ENCODE measurements at regions of chr12 and their contacts with region 1.

Region 1: GRCh38 chr12:119544765-119545625 is 48.6 kb upstream of the TMEM233 start:
- DNase-seq: peak; percentile 70
- H3K4me3 Mint-ChIP-seq: no peak overlapping the region
- H3K27ac Mint-ChIP-seq: no peak overlapping the region
- H3K4me1 Mint-ChIP-seq: no peaks in the 10 kb centered on the region
- H3K27me3 Mint-ChIP-seq: peaks cover 48% of the 10 kb centered on the region
- CTCF ChIP-seq: peak; percentile 91

Region 2: DNA sequence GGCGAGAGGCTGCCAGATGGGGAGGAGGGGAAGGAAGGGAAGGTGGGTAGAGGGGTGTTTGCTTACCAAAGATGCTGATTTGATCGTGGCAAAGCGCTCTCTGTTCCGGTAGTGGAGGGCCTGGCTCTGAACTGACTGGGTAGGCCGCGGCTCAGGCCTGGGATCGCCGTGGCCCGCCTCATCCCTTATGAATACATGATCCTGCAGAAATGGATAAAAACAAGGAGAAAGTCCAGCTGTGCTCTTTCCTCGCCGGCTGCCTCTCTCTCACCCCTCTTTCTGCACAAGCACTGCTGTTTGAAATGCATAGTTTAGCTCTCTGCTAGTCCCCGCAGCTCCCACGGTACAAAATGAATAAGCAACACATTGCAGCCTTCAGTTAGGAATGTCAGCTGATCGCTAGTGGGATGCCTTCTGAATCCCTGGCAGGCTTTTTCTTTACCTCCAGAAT is 1355.2 kb before region 1 on chr12:
- CTCF ChIA-PET with region 1: no interaction called
- POLR2A ChIA-PET with region 1: no interaction called
- intact Hi-C with region 1: loop called (anchors 10 kb)
- DNase-seq: no peak
- H3K4me3 Mint-ChIP-seq: no peak overlapping the region
- H3K27ac Mint-ChIP-seq: peak overlapping the region; percentile 63
- H3K4me1 Mint-ChIP-seq: peaks cover 24% of the 10 kb centered on the region
- H3K27me3 Mint-ChIP-seq: no peaks in the 10 kb centered on the region
- CTCF ChIP-seq: no peak

Region 3: DNA sequence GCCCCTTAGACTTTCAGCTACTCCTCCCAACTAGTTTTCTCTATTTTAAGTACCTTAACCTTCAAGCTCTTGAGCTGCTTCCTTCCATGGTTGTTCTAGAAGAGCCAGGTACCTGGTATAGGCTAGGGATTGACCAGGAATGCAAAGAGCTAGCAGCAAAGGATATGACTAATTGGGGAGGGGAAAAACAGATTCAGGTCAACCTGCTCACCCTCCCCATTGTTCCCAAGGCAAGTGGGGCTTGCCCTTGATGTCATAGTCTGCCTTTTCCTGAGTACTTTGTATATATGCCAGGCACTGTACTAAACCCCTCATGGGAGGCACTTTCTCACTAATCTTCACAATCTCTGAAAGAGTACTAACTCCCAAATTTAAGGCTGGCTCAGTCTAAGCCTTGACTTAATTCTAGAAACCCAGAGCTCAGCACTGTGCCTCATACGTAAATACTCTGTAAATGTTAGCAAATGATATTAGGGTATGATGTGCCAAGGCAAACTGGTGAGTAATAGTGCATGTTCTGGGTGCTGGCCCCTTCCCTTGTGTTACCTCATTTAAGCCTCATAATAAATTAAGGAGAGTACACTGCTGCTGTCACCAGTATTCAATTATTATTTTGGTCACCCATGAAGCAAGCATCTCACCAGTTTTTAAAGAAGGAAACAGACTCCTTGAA is 1126.5 kb before region 1 on chr12:
- CTCF ChIA-PET with region 1: interaction called, 20 read pairs
- POLR2A ChIA-PET with region 1: no interaction called
- intact Hi-C with region 1: no loop called
- DNase-seq: peak; percentile 50
- H3K4me3 Mint-ChIP-seq: no peak overlapping the region
- H3K27ac Mint-ChIP-seq: peak overlapping the region; percentile 49
- H3K4me1 Mint-ChIP-seq: peaks cover 15% of the 10 kb centered on the region
- H3K27me3 Mint-ChIP-seq: no peaks in the 10 kb centered on the region
- CTCF ChIP-seq: no peak

Region 4: DNA sequence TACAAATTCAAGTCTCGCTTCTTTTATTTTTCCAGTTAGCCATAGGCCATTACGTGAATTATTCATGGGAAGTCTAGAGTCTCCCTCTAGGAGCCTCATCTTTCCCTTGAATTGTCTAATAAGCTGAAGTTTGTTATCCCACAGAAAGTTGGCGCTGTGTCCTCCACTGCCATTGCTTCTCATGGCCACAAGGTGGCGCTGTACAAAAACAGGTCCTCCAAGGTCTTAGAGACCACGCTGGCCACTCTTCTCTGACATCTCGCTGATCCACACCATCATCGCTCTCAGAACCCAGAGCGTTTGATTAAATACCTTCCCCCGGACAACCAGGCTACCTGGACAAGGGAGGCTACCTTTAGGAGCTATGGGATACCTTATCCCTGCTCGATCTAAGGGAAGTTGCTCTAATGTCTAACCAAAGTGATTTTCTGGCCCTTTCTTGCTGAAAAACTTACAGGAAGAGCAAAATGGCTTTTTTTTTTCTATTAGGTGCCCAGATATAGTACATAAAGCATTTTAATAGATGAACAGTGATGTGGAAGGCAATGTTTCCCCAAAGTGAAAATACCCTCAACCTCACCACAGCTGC is 100.4 kb before region 1 on chr12:
- CTCF ChIA-PET with region 1: interaction called, 49 read pairs
- POLR2A ChIA-PET with region 1: no interaction called
- intact Hi-C with region 1: loop called (anchors 5 kb)
- DNase-seq: peak; percentile 57
- H3K4me3 Mint-ChIP-seq: no peak overlapping the region
- H3K27ac Mint-ChIP-seq: no peak overlapping the region
- H3K4me1 Mint-ChIP-seq: no peaks in the 10 kb centered on the region
- H3K27me3 Mint-ChIP-seq: no peaks in the 10 kb centered on the region
- CTCF ChIP-seq: peak; percentile 65

Region 5: GRCh38 chr12:119649202-119649808 is 104.3 kb after region 1 on chr12:
- CTCF ChIA-PET with region 1: interaction called, 3 read pairs
- POLR2A ChIA-PET with region 1: no interaction called
- intact Hi-C with region 1: loop called (anchors 1 kb)
- DNase-seq: peak; percentile 44
- H3K4me3 Mint-ChIP-seq: no peak overlapping the region
- H3K27ac Mint-ChIP-seq: no peak overlapping the region
- H3K4me1 Mint-ChIP-seq: no peaks in the 10 kb centered on the region
- H3K27me3 Mint-ChIP-seq: peaks cover 12% of the 10 kb centered on the region
- CTCF ChIP-seq: peak; percentile 76